WTC11 (cell line): ENCODE measurements at regions of chr10 and their contacts with region 1.

Region 1: GRCh38 chr10:11499425-11500071 is 111.9 kb downstream of the USP6NL start:
- DNase-seq: no peak
- ATAC-seq: no peak
- H3K4me3 Mint-ChIP-seq: no peak overlapping the region
- H3K27ac Mint-ChIP-seq: no peak overlapping the region
- H3K4me1 Mint-ChIP-seq: 0 out of 2 replicates have a peak, but pooled peaks cover 6% of the 10 kb centered on the region
- H3K27me3 Mint-ChIP-seq: no peaks in the 10 kb centered on the region
- CTCF ChIP-seq: no peak

Region 2: GRCh38 chr10:11255796-11256444 is 243.6 kb before region 1 on chr10:
- CTCF ChIA-PET with region 1: no interaction called
- POLR2A ChIA-PET with region 1: no interaction called
- DNase-seq: no peak
- ATAC-seq: no peak
- H3K4me3 Mint-ChIP-seq: no peak overlapping the region
- H3K27ac Mint-ChIP-seq: no peak overlapping the region
- H3K4me1 Mint-ChIP-seq: peaks cover 17% of the 10 kb centered on the region
- H3K27me3 Mint-ChIP-seq: no peaks in the 10 kb centered on the region
- CTCF ChIP-seq: no peak

Region 3: DNA sequence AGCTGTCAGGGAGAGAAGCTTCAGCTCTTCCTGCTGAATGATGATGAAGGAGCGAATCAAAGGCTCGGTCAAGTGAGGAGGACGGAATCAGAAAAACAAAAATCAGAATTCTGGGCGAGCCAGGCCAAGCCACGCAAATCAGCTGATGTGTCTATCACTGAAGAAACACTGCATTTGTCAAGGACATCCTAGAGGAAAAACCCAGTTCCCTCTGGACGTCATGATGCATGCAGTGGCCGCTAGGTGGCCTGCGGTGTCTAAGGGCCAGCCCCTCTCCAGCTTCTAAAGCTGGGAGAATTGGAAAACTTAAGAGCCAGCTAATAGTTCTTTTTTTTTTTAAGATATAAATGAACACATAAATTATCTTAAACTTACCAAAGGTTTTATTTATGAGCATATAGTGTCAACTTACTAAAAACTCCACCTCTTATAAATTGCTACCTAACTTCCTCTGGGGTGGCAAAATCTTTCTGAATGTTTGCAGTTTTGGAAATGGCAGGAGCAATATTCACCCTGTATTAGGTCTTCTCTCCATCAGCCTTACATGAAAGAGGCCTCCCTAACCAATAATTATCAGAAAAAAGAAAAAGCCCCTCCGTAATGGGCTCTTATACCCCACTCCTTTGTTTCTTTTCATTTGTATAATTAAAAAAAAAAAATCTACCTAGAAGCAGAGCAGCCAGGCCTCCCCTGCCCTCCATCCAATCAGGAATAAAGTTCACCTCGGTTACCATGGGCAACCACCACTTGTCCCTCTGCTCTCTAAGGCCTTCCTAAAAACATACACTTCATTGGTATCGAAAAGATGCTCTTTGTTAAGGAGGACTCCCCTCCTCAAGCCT is 74.9 kb before region 1 on chr10:
- CTCF ChIA-PET with region 1: interaction called, 11 read pairs
- POLR2A ChIA-PET with region 1: no interaction called
- DNase-seq: peak; percentile 71
- ATAC-seq: peak; percentile 93
- H3K4me3 Mint-ChIP-seq: no peak overlapping the region
- H3K27ac Mint-ChIP-seq: no peak overlapping the region
- H3K4me1 Mint-ChIP-seq: peaks cover 6% of the 10 kb centered on the region; the same call in 1 of the 2 replicates
- H3K27me3 Mint-ChIP-seq: no peaks in the 10 kb centered on the region
- CTCF ChIP-seq: peak; percentile 84

Region 4: GRCh38 chr10:11483201-11484148 is 16.1 kb before region 1 on chr10:
- CTCF ChIA-PET with region 1: interaction called, 13 read pairs
- POLR2A ChIA-PET with region 1: no interaction called
- DNase-seq: no peak
- ATAC-seq: no peak
- H3K4me3 Mint-ChIP-seq: no peak overlapping the region
- H3K27ac Mint-ChIP-seq: peak overlapping the region; percentile 21
- H3K4me1 Mint-ChIP-seq: peaks cover 19% of the 10 kb centered on the region
- H3K27me3 Mint-ChIP-seq: no peaks in the 10 kb centered on the region
- CTCF ChIP-seq: no peak

Region 5: DNA sequence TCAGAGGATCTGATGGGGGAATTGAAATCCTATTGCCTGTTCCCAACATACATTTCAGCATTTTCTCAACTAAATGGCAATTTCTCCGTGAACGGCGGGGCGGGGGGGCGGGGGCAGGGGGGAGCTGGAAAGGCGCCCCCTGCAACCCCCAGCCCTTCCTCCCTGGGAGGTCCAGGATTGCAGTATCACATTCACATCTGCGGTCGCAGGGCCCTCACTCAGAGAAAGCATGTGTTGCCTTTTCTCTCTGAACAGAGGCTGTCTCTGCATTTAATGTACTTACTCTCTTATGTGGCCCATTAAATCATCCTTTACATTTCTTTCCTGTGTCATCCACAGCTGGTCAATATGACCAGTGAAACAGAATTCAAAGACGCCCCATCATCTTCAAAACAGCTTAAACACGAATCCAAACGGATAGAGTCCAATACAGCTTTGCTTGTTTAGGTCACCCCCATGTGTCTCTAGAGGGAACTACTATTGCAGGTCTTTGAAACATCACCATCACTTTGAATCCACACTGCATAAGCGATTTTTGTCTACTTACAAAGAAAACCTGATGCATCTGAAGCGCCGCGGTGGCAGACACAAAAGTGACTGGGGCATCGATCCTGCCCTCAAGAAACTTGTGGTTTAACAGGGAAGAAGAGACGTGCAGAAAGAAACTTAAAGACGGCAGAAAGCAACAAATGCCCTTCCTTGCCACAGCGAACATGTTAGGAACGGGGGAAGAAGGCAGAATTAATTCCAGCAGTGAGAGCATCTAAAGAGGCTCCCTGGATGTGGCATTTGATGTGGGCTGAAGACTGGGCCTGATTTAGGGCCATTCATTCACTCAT is 225.6 kb after region 1 on chr10:
- CTCF ChIA-PET with region 1: interaction called, 10 read pairs
- POLR2A ChIA-PET with region 1: no interaction called
- DNase-seq: no peak
- ATAC-seq: peak; percentile 74
- H3K4me3 Mint-ChIP-seq: no peak overlapping the region
- H3K27ac Mint-ChIP-seq: no peak overlapping the region
- H3K4me1 Mint-ChIP-seq: 0 out of 2 replicates have a peak, but pooled peaks cover 5% of the 10 kb centered on the region
- H3K27me3 Mint-ChIP-seq: no peaks in the 10 kb centered on the region; the same call in 1 of the 2 replicates
- CTCF ChIP-seq: 0 out of 2 replicates have a peak, but pooled peaks have one; percentile 17

Region 6: DNA sequence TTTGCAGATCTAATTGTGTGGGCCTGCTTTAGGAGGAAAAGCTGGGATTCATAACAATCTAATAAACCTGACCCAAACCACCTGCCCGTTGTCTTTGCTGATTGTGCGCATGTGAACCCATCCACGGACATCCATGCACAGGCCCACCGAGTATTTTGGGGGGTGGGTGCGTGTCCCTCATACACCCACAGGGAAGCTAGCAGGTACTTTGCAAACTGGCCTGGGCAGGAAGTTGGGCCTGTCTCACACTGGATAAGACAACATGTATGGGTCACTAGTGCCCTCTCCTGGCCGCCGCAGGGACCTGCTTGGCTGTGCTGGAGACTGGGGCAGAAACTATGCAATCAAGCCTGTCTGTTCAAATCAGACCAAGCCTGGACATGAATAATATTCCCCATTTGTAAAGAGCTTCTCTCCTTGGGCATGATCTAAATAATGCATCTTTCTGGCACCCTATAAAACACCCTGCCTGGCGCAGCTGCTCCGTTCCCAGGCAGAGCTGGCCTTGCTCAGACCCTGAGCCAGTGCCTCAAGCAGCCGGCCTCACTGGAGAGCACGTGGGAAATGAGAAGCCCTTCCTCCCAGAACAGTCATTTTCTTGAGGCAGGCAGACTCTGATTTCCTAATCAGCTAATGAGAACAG is 258.4 kb after region 1 on chr10:
- CTCF ChIA-PET with region 1: interaction called, 15 read pairs
- POLR2A ChIA-PET with region 1: no interaction called
- DNase-seq: peak; percentile 91
- ATAC-seq: peak; percentile 98
- H3K4me3 Mint-ChIP-seq: no peak overlapping the region
- H3K27ac Mint-ChIP-seq: peak overlapping the region; percentile 60; the same call in 1 of the 2 replicates
- H3K4me1 Mint-ChIP-seq: 0 out of 2 replicates have a peak, but pooled peaks cover 4% of the 10 kb centered on the region
- H3K27me3 Mint-ChIP-seq: no peaks in the 10 kb centered on the region
- CTCF ChIP-seq: peak; percentile 79